OCI-LY7 (cell line): ENCODE measurements at regions of chr2 and their contacts with region 1.

Region 1: DNA sequence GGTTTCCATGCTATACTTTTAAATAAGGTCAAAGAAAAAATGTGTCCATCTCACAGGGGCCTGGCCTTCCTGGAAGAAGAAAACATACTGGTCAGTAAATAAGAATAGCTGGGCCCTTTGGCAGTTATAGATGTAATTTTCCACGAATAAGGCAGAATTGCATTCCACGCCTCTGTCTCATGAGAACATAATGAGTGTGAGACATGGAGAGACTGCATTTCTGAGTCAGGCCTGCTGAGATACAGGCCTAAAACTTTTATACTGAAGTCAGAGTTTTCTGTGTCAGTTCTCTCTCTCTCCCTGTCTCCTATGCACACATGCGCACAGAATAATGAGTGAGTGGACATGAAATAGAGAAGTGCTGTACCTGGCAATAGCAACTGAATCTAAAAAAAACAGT is 20.4 kb upstream of the IL1R1 start:
- DNase-seq: no peak
- H3K4me3 ChIP-seq: no peak overlapping the region
- H3K27ac ChIP-seq: no peak overlapping the region
- H3K4me1 ChIP-seq: no peaks in the 10 kb centered on the region
- CTCF ChIP-seq: no peak

Region 2: GRCh38 chr2:101047075-101047766 is 1074.9 kb before region 1 on chr2:
- CTCF ChIA-PET with region 1: no interaction called
- POLR2A ChIA-PET with region 1: no interaction called
- intact Hi-C with region 1: loop called (anchors 10 kb)
- DNase-seq: no peak
- H3K4me3 ChIP-seq: no peak overlapping the region
- H3K27ac ChIP-seq: no peak overlapping the region
- H3K4me1 ChIP-seq: no peaks in the 10 kb centered on the region
- CTCF ChIP-seq: no peak

Region 3: DNA sequence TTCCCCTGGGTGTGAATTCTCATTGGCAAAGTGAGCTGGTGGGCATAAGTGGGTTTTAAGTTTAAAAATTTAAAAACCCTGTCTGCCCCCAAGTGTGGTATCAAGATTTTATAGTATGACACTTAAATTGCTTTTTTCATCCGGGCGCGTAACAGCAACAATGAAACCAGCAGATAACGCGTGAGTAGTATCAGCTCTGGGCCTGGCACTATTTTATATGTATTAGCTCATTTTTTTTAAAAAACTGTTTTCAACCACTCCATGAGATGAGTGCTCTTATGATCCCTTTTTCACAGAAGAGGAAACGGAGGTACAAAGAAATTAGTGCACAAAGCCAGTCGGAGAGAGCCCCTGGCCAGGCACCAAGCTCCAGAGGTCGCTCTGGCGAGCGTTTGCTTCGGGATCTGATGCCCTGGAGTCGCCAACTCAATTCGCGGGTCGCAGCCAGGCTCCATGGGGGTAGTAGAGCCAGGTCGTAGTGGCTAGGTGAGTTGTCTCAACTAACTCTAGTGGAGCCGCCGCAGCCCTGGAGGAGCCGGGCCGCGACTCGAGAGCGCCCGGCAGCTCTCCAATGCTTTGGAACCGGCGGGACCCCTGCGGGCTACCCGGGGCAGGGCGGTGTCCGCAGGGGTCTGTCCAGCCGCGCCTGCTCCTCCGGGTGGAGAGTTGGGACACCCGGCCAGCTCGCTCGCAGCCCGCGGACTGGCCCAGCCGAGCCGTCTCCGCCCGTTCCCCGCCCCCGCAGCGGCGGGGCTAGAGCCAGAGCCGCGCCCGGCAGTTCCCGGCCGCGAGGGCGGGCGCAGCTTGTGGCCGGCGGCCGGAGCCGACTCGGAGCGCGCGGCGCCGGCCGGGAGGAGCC is 20.1 kb after region 1 on chr2 and contains the start of gene IL1R1:
- CTCF ChIA-PET with region 1: no interaction called
- POLR2A ChIA-PET with region 1: no interaction called
- intact Hi-C with region 1: no loop called
- DNase-seq: no peak
- H3K4me3 ChIP-seq: no peak within 1 kb of the TSS
- H3K27ac ChIP-seq: no peak within 1 kb of the TSS
- H3K4me1 ChIP-seq: no peaks in the 10 kb centered on the region
- CTCF ChIP-seq: no peak
- total RNA-seq, gene IL1R1: not detected in 2 replicates